SK-N-SH (cell line): ENCODE measurements at regions of chr2 and their contacts with region 1.

Region 1: DNA sequence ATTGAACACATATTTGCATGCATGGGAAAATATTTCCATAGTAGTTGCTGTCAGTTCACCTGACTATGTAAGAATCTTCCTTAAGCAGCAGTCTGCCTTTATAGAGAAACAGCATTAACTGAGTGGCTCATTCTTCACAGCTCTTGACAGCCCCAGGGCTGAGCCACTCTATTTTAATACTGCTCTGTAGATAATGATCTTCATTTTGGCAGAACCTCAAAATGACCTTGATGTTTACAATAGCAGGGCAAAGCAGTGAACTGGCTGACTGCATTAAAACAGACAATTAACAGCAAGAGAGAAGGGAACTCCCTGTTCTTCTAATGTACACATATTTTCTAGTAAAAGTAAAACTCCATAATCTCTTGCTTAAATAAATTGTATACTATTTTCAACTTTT is 580.6 kb upstream of the SOX11 start:
- DNase-seq: peak; percentile 52
- H3K4me3 ChIP-seq: no peak overlapping the region
- H3K27ac ChIP-seq: no peak overlapping the region
- H3K4me1 ChIP-seq: peaks cover 0 to 5% of the 10 kb centered on the region in 2 experiments; a peak in 2 of 4 replicates
- H3K27me3 ChIP-seq: no peaks in the 10 kb centered on the region
- CTCF ChIP-seq: no peak
- EP300 ChIP-seq: peak in 1 of 2 experiments; percentile 79; a peak in 2 of 4 replicates
- RAD21 ChIP-seq: peak; percentile 31; the same call in 1 of the 2 replicates

Region 2: DNA sequence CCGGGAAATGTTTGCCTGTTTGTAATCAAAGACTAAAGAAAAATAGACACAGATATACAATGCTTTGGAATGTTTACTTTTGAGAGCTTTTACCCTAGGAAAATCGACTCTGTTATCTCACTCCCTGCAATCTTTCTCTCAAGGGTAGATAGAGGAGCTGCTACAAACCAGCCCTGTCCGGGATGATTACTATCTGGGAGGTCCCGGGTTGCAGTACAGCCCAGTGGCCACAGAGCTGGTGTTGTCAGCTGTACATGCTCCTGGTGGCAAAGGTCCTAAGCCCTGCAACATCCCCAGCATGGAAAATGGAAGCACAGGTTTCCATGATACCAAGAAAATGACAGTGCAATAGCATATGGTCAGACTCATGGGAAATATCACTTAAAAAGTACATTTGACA is 10.1 kb after region 1 on chr2:
- CTCF ChIA-PET with region 1: interaction called, 14 read pairs
- POLR2A ChIA-PET with region 1: no interaction called
- DNase-seq: peak; percentile 83
- H3K4me3 ChIP-seq: no peak overlapping the region
- H3K27ac ChIP-seq: no peak overlapping the region
- H3K4me1 ChIP-seq: peaks cover 0 to 16% of the 10 kb centered on the region in 2 experiments; a peak in 2 of 4 replicates
- H3K27me3 ChIP-seq: no peaks in the 10 kb centered on the region
- CTCF ChIP-seq: no peak
- EP300 ChIP-seq: 0 out of 4 replicates have a peak, but pooled peaks of 1 of the 2 experiments have one; percentile 9
- RAD21 ChIP-seq: peak; percentile 44